Breast epithelium (tissue), 4 donors: ENCODE measurements at regions of chr16 and their contacts with region 1.

Region 1: GRCh38 chr16:1929578-1930337 is 11.5 kb upstream of the HS3ST6 start:
- DNase-seq: peak; percentile 82 to 89
- H3K4me3 ChIP-seq: peak overlapping the region; percentile 55 to 85 (median 58)
- H3K27ac ChIP-seq: peak overlapping the region; percentile 56 to 82
- H3K4me1 ChIP-seq: no peaks in the 10 kb centered on the region
- H3K27me3 ChIP-seq: no peaks in the 10 kb centered on the region
- CTCF ChIP-seq: peak; percentile 48 to 100 (median 67)
- POLR2A ChIP-seq: no peak

Region 2: GRCh38 chr16:1865903-1866690 is 63.7 kb before region 1 on chr16:
- intact Hi-C with region 1: loop called (anchors 5 kb)
- DNase-seq: no peak
- H3K4me3 ChIP-seq: no peak overlapping the region
- H3K27ac ChIP-seq: no peak overlapping the region
- H3K4me1 ChIP-seq: no peaks in the 10 kb centered on the region
- H3K27me3 ChIP-seq: no peaks in the 10 kb centered on the region
- CTCF ChIP-seq: no peak
- POLR2A ChIP-seq: no peak

Region 3: DNA sequence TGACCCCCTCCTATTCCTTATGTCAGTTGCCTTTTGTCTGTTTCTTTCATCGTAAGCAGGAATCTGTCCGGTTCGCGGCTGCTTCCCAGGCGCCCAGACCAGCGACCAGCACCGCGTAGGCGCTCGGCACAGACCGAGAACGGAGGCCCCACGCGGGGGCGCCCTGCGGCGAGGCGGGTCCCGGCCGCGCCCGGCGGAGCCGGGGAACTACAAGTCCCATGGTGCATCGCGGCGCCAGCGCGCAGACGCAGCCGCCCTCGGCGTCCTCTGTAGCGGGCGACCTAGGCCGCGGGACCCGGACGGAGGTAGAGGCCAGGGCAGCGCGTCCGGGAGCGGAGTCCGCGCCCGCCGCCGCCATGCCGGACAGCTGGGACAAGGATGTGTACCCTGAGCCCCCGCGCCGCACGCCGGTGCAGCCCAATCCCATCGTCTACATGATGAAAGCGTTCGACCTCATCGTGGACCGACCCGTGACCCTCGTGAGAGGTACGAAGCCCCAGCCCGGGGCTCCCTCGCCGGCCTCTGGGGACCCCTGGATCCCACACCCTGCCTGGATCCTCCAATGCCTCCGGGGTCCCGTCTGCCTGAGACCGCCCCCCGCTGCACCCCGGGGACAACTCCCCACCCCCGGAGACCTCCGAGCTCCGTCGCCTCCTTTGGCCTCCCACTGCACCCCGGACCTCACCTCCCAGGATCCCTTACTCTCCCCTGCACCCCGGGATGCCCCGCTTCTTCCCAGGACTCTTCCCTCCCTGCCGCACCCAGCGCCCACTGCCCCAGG is 29.7 kb after region 1 on chr16 and contains the start of gene NDUFB10:
- intact Hi-C with region 1: no loop called
- DNase-seq: peak; percentile 75 to 90
- H3K4me3 ChIP-seq: peak within 1 kb of the TSS; percentile 68 to 85 (median 79)
- H3K27ac ChIP-seq: peak within 1 kb of the TSS; percentile 75 to 82
- H3K4me1 ChIP-seq: peaks cover 2 to 10% of the 10 kb centered on the region in 2 donors
- H3K27me3 ChIP-seq: no peaks in the 10 kb centered on the region
- CTCF ChIP-seq: peak in 2 of 3 donors; percentile 27 to 40
- POLR2A ChIP-seq: no peak
- total RNA-seq, gene NDUFB10: 114 to 233 (median 144) TPM